ENCODE measurements at regions of chr2 and their contacts with region 1.

Region 1: GRCh38 chr2:223860809-223861738 is 23.7 kb upstream of the AP1S3 start:
- DNase-seq: no peak
- H3K4me3 ChIP-seq: no peak overlapping the region
- H3K27ac ChIP-seq: no peak overlapping the region
- H3K4me1 ChIP-seq: no peaks in the 10 kb centered on the region
- H3K27me3 ChIP-seq: no peaks in the 10 kb centered on the region
- CTCF ChIP-seq: no peak
- POLR2A ChIP-seq: no peak

Region 2: DNA sequence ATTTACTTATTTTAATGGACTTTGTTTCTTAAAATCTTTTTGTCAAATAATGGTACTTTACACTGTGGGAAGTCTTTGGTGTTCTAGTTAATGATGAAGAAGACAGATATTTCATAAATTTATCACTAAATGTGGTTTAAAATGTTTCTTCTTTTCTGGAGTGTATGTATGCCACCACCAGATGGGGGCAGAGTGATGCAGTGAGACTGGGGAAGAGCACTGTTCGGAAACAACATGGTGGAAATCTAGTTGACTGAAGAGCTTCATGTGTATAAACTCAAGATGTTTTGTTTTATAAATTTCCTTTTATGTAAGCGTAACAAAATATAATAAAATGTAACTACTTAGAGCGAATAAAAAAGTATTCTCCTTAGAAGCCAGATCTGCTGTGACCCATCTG is 613.9 kb before region 1 on chr2:
- CTCF ChIA-PET with region 1: interaction called, 19 read pairs
- POLR2A ChIA-PET with region 1: no interaction called
- dilution Hi-C with region 1: no loop called
- intact Hi-C with region 1: no loop called
- DNase-seq: peak; percentile 40
- H3K4me3 ChIP-seq: no peak overlapping the region
- H3K27ac ChIP-seq: no peak overlapping the region
- H3K4me1 ChIP-seq: no peaks in the 10 kb centered on the region
- H3K27me3 ChIP-seq: no peaks in the 10 kb centered on the region
- CTCF ChIP-seq: peak; percentile 16 to 33
- POLR2A ChIP-seq: no peak

Region 3: GRCh38 chr2:223674998-223675609 is 186.0 kb before region 1 on chr2:
- CTCF ChIA-PET with region 1: interaction called, 23 read pairs
- POLR2A ChIA-PET with region 1: no interaction called
- dilution Hi-C with region 1: no loop called
- intact Hi-C with region 1: loop called (anchors 1 kb)
- DNase-seq: peak; percentile 69
- H3K4me3 ChIP-seq: no peak overlapping the region
- H3K27ac ChIP-seq: no peak overlapping the region
- H3K4me1 ChIP-seq: no peaks in the 10 kb centered on the region
- H3K27me3 ChIP-seq: no peaks in the 10 kb centered on the region
- CTCF ChIP-seq: peak; percentile 60 to 69
- POLR2A ChIP-seq: no peak

Region 4: DNA sequence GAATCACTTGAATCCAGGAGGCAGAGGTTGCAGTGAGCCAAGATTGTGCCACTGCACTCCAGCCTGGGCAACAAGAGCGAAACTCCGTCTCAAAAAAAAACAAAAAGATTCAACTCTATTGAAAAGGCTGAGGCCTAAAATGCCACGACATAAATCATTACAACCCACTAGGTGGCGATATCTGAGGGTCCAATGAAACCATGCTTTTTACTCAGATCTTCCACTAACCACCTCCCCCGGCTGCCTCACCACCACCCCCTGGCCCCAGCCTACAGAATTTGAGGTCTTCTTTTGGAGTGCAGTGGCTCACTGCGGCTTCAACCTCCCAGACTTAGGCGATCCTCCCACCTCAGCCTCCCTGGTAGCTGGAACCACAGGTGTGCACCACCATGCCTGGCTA is 81.2 kb before region 1 on chr2:
- CTCF ChIA-PET with region 1: interaction called, 12 read pairs
- POLR2A ChIA-PET with region 1: no interaction called
- dilution Hi-C with region 1: no loop called
- intact Hi-C with region 1: loop called (anchors 1 kb)
- DNase-seq: peak; percentile 53
- H3K4me3 ChIP-seq: no peak overlapping the region
- H3K27ac ChIP-seq: no peak overlapping the region
- H3K4me1 ChIP-seq: no peaks in the 10 kb centered on the region
- H3K27me3 ChIP-seq: no peaks in the 10 kb centered on the region
- CTCF ChIP-seq: peak; percentile 26 to 46
- POLR2A ChIP-seq: no peak

Region 5: DNA sequence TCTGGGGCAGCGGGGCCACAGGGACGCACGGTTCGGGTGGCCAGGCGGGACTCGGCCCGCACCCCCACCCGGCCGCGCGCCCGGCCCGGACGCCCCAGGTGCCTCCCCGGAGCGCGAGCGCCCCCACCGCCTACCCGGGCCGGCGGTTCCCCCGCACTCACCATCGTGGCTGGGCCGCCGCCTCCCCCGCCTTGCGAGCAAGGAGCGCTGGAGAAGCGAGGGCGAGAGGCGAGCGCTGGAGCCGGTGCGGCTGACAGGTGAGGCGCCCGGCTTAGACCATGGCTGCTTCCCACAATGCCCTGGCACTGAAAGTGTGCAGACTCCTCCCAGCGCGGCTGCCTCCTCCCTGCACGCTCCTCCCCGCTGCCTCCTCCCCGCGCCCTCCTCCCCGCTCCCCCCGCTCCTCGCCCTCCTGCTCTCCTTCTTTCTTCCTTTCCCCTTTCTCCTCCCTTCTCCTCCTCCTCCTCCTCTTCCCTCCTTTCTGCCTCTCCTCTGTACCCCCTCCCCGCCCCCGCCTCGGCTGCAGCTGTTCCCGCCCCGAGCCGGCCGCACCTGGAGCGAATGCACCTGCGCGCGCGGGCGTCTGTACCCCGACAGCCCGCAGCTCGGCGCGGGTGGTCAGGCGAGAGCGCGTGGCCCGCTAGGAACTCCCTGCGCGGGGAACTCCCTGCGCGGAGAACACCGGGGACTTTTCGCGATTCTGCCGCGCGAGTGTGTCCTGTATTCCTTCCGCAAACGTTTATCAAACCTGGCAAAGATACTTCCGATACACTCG is 23.6 kb before region 1 on chr2 and contains the start of gene AP1S3:
- CTCF ChIA-PET with region 1: interaction called, 10 read pairs
- POLR2A ChIA-PET with region 1: no interaction called
- dilution Hi-C with region 1: no loop called
- intact Hi-C with region 1: no loop called
- DNase-seq: peak; percentile 32
- H3K4me3 ChIP-seq: peak within 1 kb of the TSS; percentile 59 to 68 (median 63)
- H3K27ac ChIP-seq: no peak within 1 kb of the TSS
- H3K4me1 ChIP-seq: peaks cover 7% of the 10 kb centered on the region
- H3K27me3 ChIP-seq: no peaks in the 10 kb centered on the region
- CTCF ChIP-seq: no peak
- POLR2A ChIP-seq: no peak
- total RNA-seq, gene AP1S3: 3.2 and 3.8 TPM in 2 replicates

Region 6: GRCh38 chr2:223979730-223980396 is 118.8 kb after region 1 on chr2:
- CTCF ChIA-PET with region 1: no interaction called
- POLR2A ChIA-PET with region 1: no interaction called
- dilution Hi-C with region 1: no loop called
- intact Hi-C with region 1: no loop called
- DNase-seq: no peak
- H3K4me3 ChIP-seq: no peak overlapping the region
- H3K27ac ChIP-seq: no peak overlapping the region
- H3K4me1 ChIP-seq: peaks cover 6% of the 10 kb centered on the region
- H3K27me3 ChIP-seq: no peaks in the 10 kb centered on the region
- CTCF ChIP-seq: no peak
- POLR2A ChIP-seq: no peak

Measured in endothelial cell of umbilical vein (primary cell).